Caco-2 (cell line): ENCODE measurements at regions of chr15 and their contacts with region 1.

Region 1: DNA sequence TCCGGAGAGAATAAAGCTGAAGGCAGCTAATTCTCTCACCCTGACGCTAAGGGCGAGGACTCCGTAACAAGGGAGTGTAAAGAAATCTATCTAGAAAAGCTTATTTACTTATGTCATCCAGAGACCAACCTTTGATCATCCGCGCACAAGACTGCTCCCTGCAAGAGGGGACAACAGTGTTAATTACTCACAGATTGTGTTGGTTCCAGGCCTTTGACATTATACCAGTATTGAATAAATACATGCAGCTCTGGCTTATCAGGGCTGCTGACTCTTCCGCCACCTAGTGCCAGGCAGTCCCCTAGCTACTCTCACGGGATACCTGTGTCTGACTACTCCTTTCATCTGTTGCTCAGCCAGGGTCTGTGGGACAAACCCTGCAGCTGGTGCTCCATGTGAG is 211.7 kb downstream of the DTWD1 start:
- DNase-seq: peak; percentile 52 to 61
- H3K4me3 ChIP-seq: no peak overlapping the region
- H3K4me3 Mint-ChIP-seq: no peak overlapping the region
- H3K27ac Mint-ChIP-seq: no peak overlapping the region
- H3K4me1 ChIP-seq: 0 out of 2 replicates have a peak, but pooled peaks cover 6% of the 10 kb centered on the region
- H3K4me1 Mint-ChIP-seq: no peaks in the 10 kb centered on the region
- H3K27me3 ChIP-seq: no peaks in the 10 kb centered on the region
- H3K27me3 Mint-ChIP-seq: no peaks in the 10 kb centered on the region
- CTCF ChIP-seq: peak; percentile 31 to 73

Region 2: DNA sequence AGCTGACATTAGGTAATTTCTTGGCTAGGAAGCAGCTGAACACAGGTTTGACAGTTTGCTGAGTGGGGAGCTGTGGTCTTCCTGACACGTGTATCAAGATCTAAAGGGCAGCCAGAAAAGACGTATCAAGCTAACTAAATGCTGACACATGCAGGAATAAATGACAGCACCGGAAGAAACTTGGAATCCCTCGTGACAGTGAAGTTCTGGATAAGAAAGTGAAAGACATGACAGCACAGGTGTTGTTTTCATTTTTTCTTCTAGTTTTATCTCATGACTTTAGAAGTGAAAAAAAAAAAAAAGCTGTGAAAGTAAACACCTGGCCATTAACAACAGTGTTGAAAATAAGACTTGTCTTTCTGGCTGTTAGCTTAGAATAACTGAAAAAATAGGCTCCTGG is 360.8 kb before region 1 on chr15:
- CTCF ChIA-PET with region 1: no interaction called
- POLR2A ChIA-PET with region 1: no interaction called
- intact Hi-C with region 1: loop called (anchors 2 kb)
- DNase-seq: no peak
- H3K4me3 ChIP-seq: no peak overlapping the region
- H3K4me3 Mint-ChIP-seq: no peak overlapping the region
- H3K27ac Mint-ChIP-seq: no peak overlapping the region
- H3K4me1 ChIP-seq: no peaks in the 10 kb centered on the region; the same call in 1 of the 2 replicates
- H3K4me1 Mint-ChIP-seq: no peaks in the 10 kb centered on the region
- H3K27me3 ChIP-seq: no peaks in the 10 kb centered on the region
- H3K27me3 Mint-ChIP-seq: peaks cover 10% of the 10 kb centered on the region
- CTCF ChIP-seq: no peak

Region 3: DNA sequence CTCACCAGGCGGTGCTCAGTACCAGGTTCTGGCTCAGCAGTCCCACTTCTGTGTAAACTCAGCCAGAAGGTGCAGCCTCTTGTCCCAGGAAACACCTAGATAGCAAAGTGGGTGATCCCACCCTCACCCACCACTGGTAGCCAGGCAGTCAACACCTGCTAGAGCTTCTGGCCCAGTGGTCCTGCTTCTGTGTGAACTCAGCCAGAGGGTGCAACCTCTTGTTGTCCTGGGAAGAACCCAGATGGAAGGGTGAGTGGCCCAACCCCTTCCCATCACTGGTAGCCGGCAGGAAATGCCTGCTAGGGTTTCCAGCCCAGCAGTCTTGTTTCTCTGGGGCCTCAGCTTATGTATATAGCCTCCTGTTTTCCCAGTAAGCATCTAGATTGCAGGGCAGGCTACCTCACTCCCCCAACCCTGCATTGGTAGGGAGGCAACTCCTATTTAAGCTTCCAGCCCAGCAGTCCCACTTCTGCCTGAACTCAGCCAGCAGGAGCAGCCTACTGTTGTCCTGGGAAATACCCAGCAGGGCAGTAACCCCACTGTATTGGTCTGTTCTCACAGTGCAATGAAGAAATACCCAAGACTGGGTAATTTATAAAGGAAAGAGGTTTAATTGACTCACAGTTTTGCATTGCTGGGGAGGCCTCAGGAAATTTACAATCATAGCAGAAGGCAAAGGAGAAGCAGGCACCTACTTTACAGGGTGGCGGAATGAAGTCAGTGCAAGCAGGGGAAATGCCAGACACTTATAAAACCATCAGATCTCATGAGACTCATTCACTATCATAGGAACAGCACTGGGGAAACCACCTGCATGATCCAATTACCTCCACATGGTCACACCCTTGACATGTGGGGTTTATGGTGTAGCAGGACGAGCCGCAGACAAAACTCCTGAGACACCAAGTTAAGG is 101.1 kb before region 1 on chr15:
- CTCF ChIA-PET with region 1: no interaction called
- POLR2A ChIA-PET with region 1: no interaction called
- intact Hi-C with region 1: no loop called
- DNase-seq: no peak
- H3K4me3 ChIP-seq: no peak overlapping the region
- H3K4me3 Mint-ChIP-seq: peak overlapping the region; percentile 30
- H3K27ac Mint-ChIP-seq: peak overlapping the region; percentile 25
- H3K4me1 ChIP-seq: peaks cover 33% of the 10 kb centered on the region
- H3K4me1 Mint-ChIP-seq: peaks cover 26% of the 10 kb centered on the region
- H3K27me3 ChIP-seq: no peaks in the 10 kb centered on the region
- H3K27me3 Mint-ChIP-seq: no peaks in the 10 kb centered on the region
- CTCF ChIP-seq: no peak